Naive thymus-derived CD4-positive, alpha-beta T cell (primary cell): ENCODE measurements at regions of chr18 and their contacts with region 1.

Region 1: GRCh38 chr18:11733031-11733430 is 44.0 kb downstream of the GNAL start:
- DNase-seq: peak; percentile 18 to 74 (median 49)
- ATAC-seq: peak; percentile 79
- H3K4me3 ChIP-seq: no peak overlapping the region
- H3K4me3 Mint-ChIP-seq: peak overlapping the region in 4 of 10 donors; percentile 14 to 37 (median 26)
- H3K27ac ChIP-seq: no peak overlapping the region
- H3K27ac Mint-ChIP-seq: no peak overlapping the region
- H3K4me1 ChIP-seq: no peaks in the 10 kb centered on the region
- H3K4me1 Mint-ChIP-seq: peaks cover 0 to 5% (median 0%) of the 10 kb centered on the region in 7 donors
- H3K27me3 ChIP-seq: peaks cover 0 to 5% of the 10 kb centered on the region in 2 donors
- H3K27me3 Mint-ChIP-seq: peaks cover 26 to 54% (median 31%) of the 10 kb centered on the region in 5 donors

Region 2: GRCh38 chr18:11437046-11437445 is 296.0 kb before region 1 on chr18:
- CTCF ChIA-PET with region 1: no interaction called
- POLR2A ChIA-PET with region 1: no interaction called
- intact Hi-C with region 1: no loop called
- DNase-seq: no peak
- ATAC-seq: no peak
- H3K4me3 ChIP-seq: no peak overlapping the region
- H3K4me3 Mint-ChIP-seq: no peak overlapping the region
- H3K27ac ChIP-seq: no peak overlapping the region
- H3K27ac Mint-ChIP-seq: no peak overlapping the region
- H3K4me1 ChIP-seq: no peaks in the 10 kb centered on the region
- H3K4me1 Mint-ChIP-seq: no peaks in the 10 kb centered on the region
- H3K27me3 ChIP-seq: no peaks in the 10 kb centered on the region
- H3K27me3 Mint-ChIP-seq: no peaks in the 10 kb centered on the region

Region 3: GRCh38 chr18:11561293-11561692 is 171.7 kb before region 1 on chr18:
- CTCF ChIA-PET with region 1: no interaction called
- POLR2A ChIA-PET with region 1: no interaction called
- intact Hi-C with region 1: no loop called
- DNase-seq: no peak
- ATAC-seq: no peak
- H3K4me3 ChIP-seq: no peak overlapping the region
- H3K4me3 Mint-ChIP-seq: no peak overlapping the region
- H3K27ac ChIP-seq: no peak overlapping the region
- H3K27ac Mint-ChIP-seq: no peak overlapping the region
- H3K4me1 ChIP-seq: no peaks in the 10 kb centered on the region
- H3K4me1 Mint-ChIP-seq: no peaks in the 10 kb centered on the region
- H3K27me3 ChIP-seq: peaks cover 0 to 3% of the 10 kb centered on the region in 2 donors
- H3K27me3 Mint-ChIP-seq: peaks cover 0 to 18% (median 6%) of the 10 kb centered on the region in 5 donors

Region 4: DNA sequence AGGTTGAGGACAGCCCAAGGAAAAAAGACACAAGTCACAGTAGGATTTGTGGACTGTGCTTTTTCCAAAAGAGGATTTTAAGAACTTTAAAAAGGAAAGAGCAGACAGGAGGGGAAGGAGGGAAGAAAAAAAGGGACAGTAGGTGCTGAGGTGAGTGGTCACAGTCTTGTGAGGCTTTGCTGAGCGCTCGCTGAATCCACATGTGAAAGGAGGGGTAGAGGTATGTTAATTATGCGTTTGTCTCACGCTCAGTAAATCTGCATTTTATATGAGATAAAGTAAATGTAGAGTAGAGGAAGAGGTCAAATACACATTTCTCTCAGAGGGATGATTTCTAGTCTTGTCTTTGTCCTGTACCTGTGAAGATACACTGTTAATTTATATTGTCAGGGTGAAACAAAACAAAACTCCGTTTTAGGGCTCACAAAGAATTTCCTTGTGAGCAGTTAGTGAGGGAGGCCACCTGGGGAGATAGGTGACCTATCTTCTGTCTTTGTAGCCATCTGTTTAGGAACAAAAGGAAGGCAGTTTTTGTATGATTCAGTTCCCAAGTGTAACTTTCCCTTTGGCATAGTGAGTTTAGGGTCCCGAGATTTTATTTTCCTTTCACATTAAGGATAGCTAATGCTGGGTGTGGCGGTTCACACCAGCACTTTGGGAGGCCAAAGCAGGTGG is 18.6 kb before region 1 on chr18:
- CTCF ChIA-PET with region 1: no interaction called
- POLR2A ChIA-PET with region 1: no interaction called
- intact Hi-C with region 1: no loop called
- DNase-seq: no peak
- ATAC-seq: no peak
- H3K4me3 ChIP-seq: no peak overlapping the region
- H3K4me3 Mint-ChIP-seq: no peak overlapping the region
- H3K27ac ChIP-seq: no peak overlapping the region
- H3K27ac Mint-ChIP-seq: no peak overlapping the region
- H3K4me1 ChIP-seq: no peaks in the 10 kb centered on the region
- H3K4me1 Mint-ChIP-seq: peaks cover 0 to 8% (median 0%) of the 10 kb centered on the region in 7 donors
- H3K27me3 ChIP-seq: peaks cover 0 to 4% of the 10 kb centered on the region in 2 donors
- H3K27me3 Mint-ChIP-seq: peaks cover 4 to 47% (median 40%) of the 10 kb centered on the region in 5 donors

Region 5: DNA sequence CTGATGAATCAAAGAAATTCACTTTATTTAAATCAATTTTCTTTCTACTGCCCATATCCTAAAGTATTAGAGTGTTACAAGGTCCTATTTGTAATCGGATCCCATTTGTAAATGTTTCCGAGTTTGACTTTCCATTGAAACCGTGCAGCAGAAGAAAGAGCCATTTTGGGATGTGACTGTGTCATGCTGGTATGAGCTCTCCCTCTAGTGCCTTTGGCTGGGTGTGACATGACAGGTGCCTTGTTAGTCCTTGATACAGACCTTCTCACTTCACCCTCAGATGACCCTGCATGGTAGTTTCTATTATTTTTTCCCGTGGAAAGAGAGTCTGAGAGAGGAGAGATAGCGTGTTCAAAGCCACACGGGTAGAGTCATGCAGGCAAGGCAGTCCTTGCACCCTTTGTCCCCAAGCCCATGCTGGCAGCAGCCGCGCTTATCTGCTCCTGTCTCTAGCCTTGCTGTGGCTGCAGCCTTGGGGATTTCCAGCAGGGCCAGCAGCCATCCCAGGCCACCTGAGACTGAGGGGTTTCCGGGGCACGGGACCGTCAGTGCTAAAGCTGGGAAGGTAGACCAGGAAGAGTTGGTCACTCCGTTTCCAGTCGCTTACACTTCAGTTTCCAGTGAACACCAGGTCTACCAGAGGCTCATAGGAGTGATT is 139.6 kb after region 1 on chr18:
- CTCF ChIA-PET with region 1: interaction called, 6 read pairs
- POLR2A ChIA-PET with region 1: no interaction called
- intact Hi-C with region 1: loop called in 1 of 2 experiments (anchors 2 kb)
- DNase-seq: peak in 3 of 9 donors; percentile 8 to 22 (median 9)
- ATAC-seq: peak; percentile 54
- H3K4me3 ChIP-seq: no peak overlapping the region
- H3K4me3 Mint-ChIP-seq: no peak overlapping the region
- H3K27ac ChIP-seq: no peak overlapping the region
- H3K27ac Mint-ChIP-seq: no peak overlapping the region
- H3K4me1 ChIP-seq: no peaks in the 10 kb centered on the region
- H3K4me1 Mint-ChIP-seq: no peaks in the 10 kb centered on the region
- H3K27me3 ChIP-seq: no peaks in the 10 kb centered on the region
- H3K27me3 Mint-ChIP-seq: peaks cover 0 to 13% (median 0%) of the 10 kb centered on the region in 5 donors

Region 6: DNA sequence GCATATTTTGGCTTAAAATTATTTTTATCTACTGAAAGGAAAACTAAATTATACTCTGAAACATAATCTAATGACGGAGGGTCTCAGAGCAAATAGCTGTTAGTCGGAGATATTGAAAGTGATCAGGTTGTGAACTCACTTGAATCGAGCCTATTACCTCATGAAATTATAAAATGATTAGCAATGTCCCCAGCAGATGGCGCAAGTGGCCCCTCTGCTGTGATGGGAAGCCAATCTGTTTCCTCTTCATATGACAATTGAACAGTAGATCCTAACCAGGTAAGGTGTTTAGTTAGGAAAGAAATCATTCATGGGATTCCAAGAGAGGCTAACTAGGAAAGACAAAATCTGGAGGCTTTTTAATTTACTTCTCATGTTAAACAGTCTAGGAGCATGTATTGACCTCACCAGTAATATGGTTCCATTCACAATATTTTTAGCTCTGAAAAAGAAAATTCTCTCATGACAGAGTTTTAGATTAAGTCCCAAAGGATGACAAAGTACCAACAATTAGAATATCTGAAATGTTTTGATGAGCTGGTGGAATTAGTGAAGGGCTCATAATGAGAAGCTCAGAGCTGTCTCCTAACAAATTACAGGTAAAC is 204.9 kb after region 1 on chr18:
- CTCF ChIA-PET with region 1: no interaction called
- POLR2A ChIA-PET with region 1: no interaction called
- intact Hi-C with region 1: loop called (anchors 1 to 10 kb)
- DNase-seq: peak; percentile 42 to 79 (median 65)
- ATAC-seq: peak; percentile 83
- H3K4me3 ChIP-seq: no peak overlapping the region
- H3K4me3 Mint-ChIP-seq: no peak overlapping the region
- H3K27ac ChIP-seq: no peak overlapping the region
- H3K27ac Mint-ChIP-seq: no peak overlapping the region
- H3K4me1 ChIP-seq: no peaks in the 10 kb centered on the region
- H3K4me1 Mint-ChIP-seq: peaks cover 0 to 8% (median 0%) of the 10 kb centered on the region in 7 donors
- H3K27me3 ChIP-seq: no peaks in the 10 kb centered on the region
- H3K27me3 Mint-ChIP-seq: peaks cover 0 to 6% (median 0%) of the 10 kb centered on the region in 5 donors

Region 7: GRCh38 chr18:11995445-11996189 is 262.6 kb after region 1 on chr18:
- CTCF ChIA-PET with region 1: interaction called, 7 read pairs
- POLR2A ChIA-PET with region 1: no interaction called
- intact Hi-C with region 1: loop called in 1 of 2 experiments (anchors 1 kb)
- DNase-seq: peak; percentile 19 to 61 (median 50)
- ATAC-seq: peak; percentile 92
- H3K4me3 ChIP-seq: peak overlapping the region; percentile 3
- H3K4me3 Mint-ChIP-seq: peak overlapping the region; percentile 4 to 74 (median 58)
- H3K27ac ChIP-seq: no peak overlapping the region
- H3K27ac Mint-ChIP-seq: peak overlapping the region in 6 of 9 donors; percentile 4 to 79 (median 52)
- H3K4me1 ChIP-seq: peaks cover 0 to 6% of the 10 kb centered on the region in 2 donors
- H3K4me1 Mint-ChIP-seq: peaks cover 9 to 21% (median 14%) of the 10 kb centered on the region in 7 donors
- H3K27me3 ChIP-seq: no peaks in the 10 kb centered on the region
- H3K27me3 Mint-ChIP-seq: no peaks in the 10 kb centered on the region

Region 8: DNA sequence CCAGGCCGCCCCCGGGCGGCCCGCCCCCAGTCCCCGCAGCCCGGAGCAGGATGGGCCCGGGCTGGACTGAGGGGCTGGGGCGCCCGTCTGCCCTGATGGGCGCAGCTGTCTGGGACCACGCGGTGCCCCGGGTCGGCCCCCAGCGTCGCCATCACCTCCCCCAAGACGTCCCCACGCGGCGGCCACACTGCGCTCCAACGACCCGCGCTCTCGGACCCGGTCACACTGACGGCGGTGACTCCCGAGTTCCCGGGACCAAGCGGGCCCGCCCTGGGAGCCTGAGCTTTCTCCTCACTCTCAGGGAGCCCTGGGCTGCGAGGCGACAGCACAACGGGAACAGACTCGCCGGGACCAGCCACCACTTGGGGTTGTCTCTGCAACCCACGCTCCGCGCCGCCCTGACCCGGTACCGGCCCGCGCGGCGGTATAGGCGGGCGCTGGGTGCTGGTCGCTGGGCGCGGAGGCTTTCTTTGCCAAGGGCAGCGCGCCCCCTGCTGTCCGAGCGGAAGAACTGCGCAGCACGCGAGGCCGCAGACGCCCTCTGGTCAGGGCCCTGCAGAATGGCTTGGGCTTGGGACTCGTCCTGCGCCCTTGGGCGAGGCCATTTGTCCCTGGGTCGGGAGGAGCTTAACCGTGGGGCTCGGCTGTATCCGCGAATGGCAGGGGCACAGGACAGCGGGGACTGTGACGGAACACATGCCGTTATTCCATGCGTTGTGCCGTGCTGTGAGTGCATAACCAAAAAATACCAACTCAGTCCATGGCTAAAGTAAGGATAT is 305.8 kb after region 1 on chr18:
- CTCF ChIA-PET with region 1: interaction called, 5 read pairs
- POLR2A ChIA-PET with region 1: no interaction called
- intact Hi-C with region 1: loop called in 1 of 2 experiments (anchors 1 kb)
- DNase-seq: peak; percentile 41 to 84 (median 68)
- ATAC-seq: peak; percentile 95
- H3K4me3 ChIP-seq: peak overlapping the region; percentile 52
- H3K4me3 Mint-ChIP-seq: peak overlapping the region; percentile 59 to 79 (median 72)
- H3K27ac ChIP-seq: no peak overlapping the region
- H3K27ac Mint-ChIP-seq: no peak overlapping the region
- H3K4me1 ChIP-seq: no peaks in the 10 kb centered on the region
- H3K4me1 Mint-ChIP-seq: peaks cover 0 to 19% (median 0%) of the 10 kb centered on the region in 7 donors
- H3K27me3 ChIP-seq: peaks cover 0 to 3% of the 10 kb centered on the region in 2 donors
- H3K27me3 Mint-ChIP-seq: peaks cover 10 to 21% (median 14%) of the 10 kb centered on the region in 5 donors